ENCODE measurements at regions of chrX and their contacts with region 1.

Region 1: DNA sequence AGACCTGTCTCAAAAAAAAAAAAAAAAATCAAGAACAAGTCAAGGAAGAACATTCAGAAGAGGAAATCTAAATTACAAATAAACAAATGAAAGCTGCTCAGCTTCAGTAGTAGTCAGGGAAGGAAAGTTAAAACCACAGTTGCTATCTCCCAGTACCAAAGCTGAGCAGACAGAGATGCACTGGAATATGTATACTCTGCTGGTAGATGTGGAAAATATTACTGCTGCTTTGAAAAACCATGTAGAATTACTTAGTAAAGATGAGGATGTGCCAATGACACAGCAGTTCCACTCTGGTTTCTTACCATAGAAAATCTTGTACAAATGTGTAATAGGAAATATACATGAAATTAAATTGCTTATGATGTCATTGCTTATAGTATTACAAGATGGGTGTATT is 25.1 kb upstream of the PRKX start:
- DNase-seq: no peak
- H3K4me3 Mint-ChIP-seq: no peak overlapping the region
- H3K27ac Mint-ChIP-seq: peak overlapping the region; percentile 88
- H3K4me1 Mint-ChIP-seq: peaks cover 28% of the 10 kb centered on the region
- H3K27me3 Mint-ChIP-seq: no peaks in the 10 kb centered on the region

Region 2: DNA sequence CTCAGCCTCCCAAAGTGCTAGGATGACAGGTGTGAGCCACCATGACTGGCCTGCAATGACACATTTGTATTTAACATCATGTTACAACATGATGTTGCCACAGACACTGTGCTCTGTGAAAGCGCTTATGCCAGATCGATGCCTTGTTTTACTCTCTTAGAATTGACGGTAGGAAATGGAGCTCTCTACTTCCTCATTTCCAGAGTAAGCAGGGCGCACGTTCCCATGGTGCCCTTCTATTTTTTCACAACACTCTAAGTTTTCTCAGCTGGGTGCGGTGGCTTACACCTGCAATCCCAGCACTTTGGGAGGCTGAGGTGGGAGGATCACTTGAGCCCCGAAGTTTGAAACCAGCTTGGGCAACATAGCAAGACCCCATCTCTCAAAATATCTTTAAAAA is 1177.1 kb before region 1 on chrX:
- intact Hi-C with region 1: no loop called
- DNase-seq: no peak
- H3K4me3 Mint-ChIP-seq: no peak overlapping the region
- H3K27ac Mint-ChIP-seq: no peak overlapping the region
- H3K4me1 Mint-ChIP-seq: no peaks in the 10 kb centered on the region
- H3K27me3 Mint-ChIP-seq: no peaks in the 10 kb centered on the region

Region 3: DNA sequence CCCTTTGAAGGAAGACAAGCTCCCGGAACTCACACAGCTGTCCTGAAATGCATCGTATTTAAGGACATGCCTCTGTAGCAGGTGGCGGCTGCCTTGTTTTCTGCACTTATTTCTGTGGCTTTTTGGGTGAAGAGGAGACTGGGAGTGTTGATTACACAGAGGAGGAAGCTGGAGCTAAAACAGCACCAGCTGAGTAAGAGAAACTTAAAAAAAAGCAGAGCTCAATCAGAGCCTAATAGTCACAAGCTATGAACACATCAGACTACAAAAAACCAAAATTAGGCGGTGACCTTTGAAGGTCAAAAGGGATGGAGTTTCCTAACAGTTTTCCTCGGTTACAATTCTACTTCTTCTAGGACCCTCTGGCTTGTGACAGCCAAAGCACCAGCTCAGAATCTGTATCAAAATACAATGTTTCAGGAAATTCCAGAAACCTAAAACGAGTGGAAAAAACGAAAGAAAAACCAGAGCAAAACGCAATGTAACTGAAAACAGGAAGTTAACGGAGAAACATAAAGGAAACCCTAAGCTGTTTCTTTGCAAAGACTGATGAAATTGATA is 38.6 kb before region 1 on chrX:
- intact Hi-C with region 1: loop called (anchors 5 kb)
- DNase-seq: no peak
- H3K4me3 Mint-ChIP-seq: peak overlapping the region; percentile 77
- H3K27ac Mint-ChIP-seq: peak overlapping the region; percentile 84
- H3K4me1 Mint-ChIP-seq: peaks cover 53% of the 10 kb centered on the region
- H3K27me3 Mint-ChIP-seq: no peaks in the 10 kb centered on the region

Region 4: GRCh38 chrX:3713225-3713936 is 25.1 kb before region 1 on chrX and contains the start of gene PRKX:
- intact Hi-C with region 1: loop called (anchors 1 kb)
- DNase-seq: peak; percentile 64
- H3K4me3 Mint-ChIP-seq: peak within 1 kb of the TSS; percentile 96
- H3K27ac Mint-ChIP-seq: peak within 1 kb of the TSS; percentile 91
- H3K4me1 Mint-ChIP-seq: peaks cover 8% of the 10 kb centered on the region
- H3K27me3 Mint-ChIP-seq: no peaks in the 10 kb centered on the region
- total RNA-seq, gene PRKX: 116 and 117 TPM in 2 replicates

Region 5: GRCh38 chrX:3811331-3812311 is 73.1 kb after region 1 on chrX:
- intact Hi-C with region 1: loop called (anchors 1 kb)
- DNase-seq: peak; percentile 22
- H3K4me3 Mint-ChIP-seq: peak overlapping the region; percentile 5
- H3K27ac Mint-ChIP-seq: peak overlapping the region; percentile 66
- H3K4me1 Mint-ChIP-seq: peaks cover 15% of the 10 kb centered on the region
- H3K27me3 Mint-ChIP-seq: peaks cover 27% of the 10 kb centered on the region

Measured in activated T-helper 2 cell treated with anti-CD3 and anti-CD28 coated beads, Interferon-gamma antibody, Interleukin-2, Interleukin-4, amounts not matched to agents 10 μg/mL and 5 μg/mL and 100 μg/mL, durations not matched to agents 14 hours and 24 hours and 36 hours (primary cell).